Activated T-helper 1 cell treated with anti-CD3 and anti-CD28 coated beads, Interleukin-12 subunit alpha, Interleukin-12 subunit beta, Interleukin-2, Interleukin-4 antibody, amounts not matched to agents 30 ng/mL and 10 ng/mL and 1 ng/mL, durations not matched to agents 14 hours and 24 hours and 36 hours (primary cell): ENCODE measurements at regions of chr14 and their contacts with region 1.

Region 1: GRCh38 chr14:50778721-50779483 is 52.1 kb downstream of the NIN start:
- DNase-seq: no peak
- H3K4me3 Mint-ChIP-seq: no peak overlapping the region
- H3K27ac Mint-ChIP-seq: no peak overlapping the region
- H3K4me1 Mint-ChIP-seq: peaks cover 25% of the 10 kb centered on the region
- H3K27me3 Mint-ChIP-seq: no peaks in the 10 kb centered on the region

Region 2: DNA sequence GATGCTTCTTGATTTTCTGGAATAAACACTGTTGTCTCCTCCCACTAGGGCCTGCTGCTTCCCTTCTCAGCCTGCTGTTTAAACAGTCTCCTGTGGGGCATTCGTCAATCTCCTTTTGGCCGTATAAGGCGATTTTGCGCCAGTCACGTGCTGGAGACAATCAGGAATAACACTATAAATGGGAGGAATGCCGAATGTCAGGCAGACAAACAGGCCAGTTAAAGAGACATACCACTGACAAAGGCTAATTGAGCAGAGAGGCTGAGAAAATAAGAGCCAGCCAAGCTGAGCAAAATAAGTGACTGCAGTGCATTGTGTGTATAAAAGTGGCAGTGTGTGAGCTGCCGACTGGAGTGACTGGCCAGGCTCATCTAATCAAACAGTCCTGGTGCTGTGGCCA is 443.5 kb before region 1 on chr14:
- intact Hi-C with region 1: no loop called
- DNase-seq: no peak
- H3K4me3 Mint-ChIP-seq: peak overlapping the region; percentile 20
- H3K27ac Mint-ChIP-seq: no peak overlapping the region
- H3K4me1 Mint-ChIP-seq: peaks cover 15% of the 10 kb centered on the region
- H3K27me3 Mint-ChIP-seq: no peaks in the 10 kb centered on the region

Region 3: DNA sequence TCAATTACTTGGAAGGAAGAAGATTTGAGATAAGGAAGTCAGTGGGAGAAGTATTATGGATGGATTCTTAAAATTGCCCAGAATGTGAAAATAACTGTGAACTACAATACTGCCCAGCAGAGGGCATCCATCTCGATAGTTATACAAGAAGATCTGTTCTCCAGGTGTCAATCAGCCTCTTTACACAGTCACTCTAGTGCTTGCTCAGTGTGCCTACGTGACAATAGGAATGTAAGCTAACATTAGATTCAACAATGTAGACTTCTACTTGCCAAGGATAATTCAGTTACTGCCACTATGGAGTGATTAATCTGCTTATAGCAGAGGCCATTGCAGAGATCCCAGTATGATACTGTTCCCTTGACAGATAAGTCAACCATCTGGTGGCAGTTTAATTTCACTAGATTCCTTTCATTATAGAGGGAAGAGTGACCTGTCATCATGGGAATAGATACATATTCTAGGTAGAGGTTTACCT is 235.9 kb before region 1 on chr14:
- intact Hi-C with region 1: loop called (anchors 1 kb)
- DNase-seq: peak; percentile 15
- H3K4me3 Mint-ChIP-seq: no peak overlapping the region
- H3K27ac Mint-ChIP-seq: no peak overlapping the region
- H3K4me1 Mint-ChIP-seq: peaks cover 16% of the 10 kb centered on the region
- H3K27me3 Mint-ChIP-seq: peaks cover 13% of the 10 kb centered on the region

Region 4: DNA sequence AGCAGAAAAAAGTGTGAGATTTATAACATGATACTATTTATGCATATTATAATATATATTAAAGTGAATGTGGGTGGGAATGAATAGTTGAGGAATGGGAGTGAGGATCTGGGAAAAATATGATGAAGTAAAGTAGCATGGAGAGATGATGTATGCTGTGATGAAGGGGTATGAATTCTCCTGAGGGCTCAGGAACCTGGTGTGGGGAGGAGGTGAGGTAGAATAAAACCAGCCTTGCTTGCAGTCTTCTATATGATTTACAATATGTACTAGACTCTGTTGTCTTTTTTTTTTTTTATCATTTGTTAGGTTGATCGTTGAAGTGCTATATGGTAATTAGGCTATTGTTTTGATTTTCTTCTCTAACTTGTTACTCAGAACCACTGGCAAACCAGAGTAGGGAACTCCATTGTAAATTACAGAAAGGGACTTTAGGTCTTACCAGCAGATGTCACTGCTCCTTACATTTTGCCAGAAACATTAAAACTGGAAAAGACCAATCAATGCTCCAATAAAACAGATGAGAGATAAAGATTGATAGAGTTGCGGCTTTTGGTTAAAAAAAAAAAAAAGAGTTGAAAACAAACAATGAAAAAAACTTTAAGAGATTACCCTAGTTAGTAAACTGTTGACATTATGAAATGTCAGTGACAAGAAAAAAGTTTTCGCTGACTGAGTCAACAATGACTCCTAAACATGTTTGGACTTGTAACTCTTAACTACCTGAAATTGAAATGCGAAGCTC is 179.0 kb before region 1 on chr14:
- intact Hi-C with region 1: loop called (anchors 1 kb)
- DNase-seq: no peak
- H3K4me3 Mint-ChIP-seq: no peak overlapping the region
- H3K27ac Mint-ChIP-seq: no peak overlapping the region
- H3K4me1 Mint-ChIP-seq: no peaks in the 10 kb centered on the region
- H3K27me3 Mint-ChIP-seq: peaks cover 4% of the 10 kb centered on the region

Region 5: DNA sequence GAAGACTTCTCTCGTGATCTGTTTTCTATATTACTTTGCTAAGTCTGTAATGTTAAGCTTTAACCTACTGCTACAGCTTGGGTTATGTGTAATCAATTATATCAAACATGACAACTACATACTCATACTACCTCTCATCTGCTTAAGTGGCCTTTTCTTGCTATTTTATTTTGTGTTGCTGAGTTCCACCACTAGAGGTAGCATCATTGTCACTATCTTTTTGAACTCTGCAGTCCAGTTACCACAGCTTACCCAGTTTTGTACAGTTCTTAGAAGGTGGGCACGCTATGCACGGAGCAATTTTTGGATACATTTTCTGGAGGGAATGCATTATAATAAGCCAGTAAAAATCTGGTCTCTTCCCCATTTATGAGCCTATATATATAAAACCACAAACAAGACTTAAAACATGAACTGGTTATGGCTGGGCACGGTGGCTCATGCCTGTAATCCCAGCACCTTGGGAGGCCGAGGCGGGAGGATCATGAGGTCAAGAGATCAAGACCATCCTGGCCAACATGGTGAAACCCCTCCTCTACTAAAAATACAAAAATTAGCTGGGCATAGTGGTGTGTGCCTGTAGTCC is 159.3 kb before region 1 on chr14:
- intact Hi-C with region 1: loop called (anchors 1 kb)
- DNase-seq: no peak
- H3K4me3 Mint-ChIP-seq: no peak overlapping the region
- H3K27ac Mint-ChIP-seq: no peak overlapping the region
- H3K4me1 Mint-ChIP-seq: no peaks in the 10 kb centered on the region
- H3K27me3 Mint-ChIP-seq: no peaks in the 10 kb centered on the region

Region 6: DNA sequence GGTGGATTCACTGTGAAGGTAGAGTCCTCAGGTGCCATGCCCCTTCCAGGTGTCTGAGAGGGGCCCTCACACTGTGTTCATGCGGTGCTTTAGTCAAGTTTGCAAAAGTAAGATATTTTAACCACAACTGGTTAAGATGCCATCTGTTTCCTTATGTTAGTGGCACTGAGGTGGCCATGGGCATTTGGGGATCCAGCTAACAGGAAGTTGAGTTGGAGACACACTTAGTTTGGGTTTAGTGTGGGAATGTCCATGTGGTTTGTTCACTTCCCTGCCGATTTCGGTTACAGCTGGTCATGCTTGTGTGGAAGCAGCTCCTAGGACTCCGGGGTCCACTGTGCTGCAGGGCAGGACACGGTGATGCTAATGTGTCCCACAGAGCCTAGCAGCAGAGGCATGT is 75.6 kb after region 1 on chr14:
- intact Hi-C with region 1: no loop called
- DNase-seq: no peak
- H3K4me3 Mint-ChIP-seq: no peak overlapping the region
- H3K27ac Mint-ChIP-seq: no peak overlapping the region
- H3K4me1 Mint-ChIP-seq: peaks cover 11% of the 10 kb centered on the region
- H3K27me3 Mint-ChIP-seq: peaks cover 11% of the 10 kb centered on the region